ENCODE measurements at regions of chr5 and their contacts with region 1.

Region 1: GRCh38 chr5:172707285-172708182 is 63.5 kb downstream of the DUSP1 start:
- DNase-seq: peak; percentile 24
- H3K4me3 ChIP-seq: 0 out of 2 replicates have a peak overlapping the region, but pooled peaks have one; percentile 8
- CTCF ChIP-seq: peak; percentile 75

Region 2: DNA sequence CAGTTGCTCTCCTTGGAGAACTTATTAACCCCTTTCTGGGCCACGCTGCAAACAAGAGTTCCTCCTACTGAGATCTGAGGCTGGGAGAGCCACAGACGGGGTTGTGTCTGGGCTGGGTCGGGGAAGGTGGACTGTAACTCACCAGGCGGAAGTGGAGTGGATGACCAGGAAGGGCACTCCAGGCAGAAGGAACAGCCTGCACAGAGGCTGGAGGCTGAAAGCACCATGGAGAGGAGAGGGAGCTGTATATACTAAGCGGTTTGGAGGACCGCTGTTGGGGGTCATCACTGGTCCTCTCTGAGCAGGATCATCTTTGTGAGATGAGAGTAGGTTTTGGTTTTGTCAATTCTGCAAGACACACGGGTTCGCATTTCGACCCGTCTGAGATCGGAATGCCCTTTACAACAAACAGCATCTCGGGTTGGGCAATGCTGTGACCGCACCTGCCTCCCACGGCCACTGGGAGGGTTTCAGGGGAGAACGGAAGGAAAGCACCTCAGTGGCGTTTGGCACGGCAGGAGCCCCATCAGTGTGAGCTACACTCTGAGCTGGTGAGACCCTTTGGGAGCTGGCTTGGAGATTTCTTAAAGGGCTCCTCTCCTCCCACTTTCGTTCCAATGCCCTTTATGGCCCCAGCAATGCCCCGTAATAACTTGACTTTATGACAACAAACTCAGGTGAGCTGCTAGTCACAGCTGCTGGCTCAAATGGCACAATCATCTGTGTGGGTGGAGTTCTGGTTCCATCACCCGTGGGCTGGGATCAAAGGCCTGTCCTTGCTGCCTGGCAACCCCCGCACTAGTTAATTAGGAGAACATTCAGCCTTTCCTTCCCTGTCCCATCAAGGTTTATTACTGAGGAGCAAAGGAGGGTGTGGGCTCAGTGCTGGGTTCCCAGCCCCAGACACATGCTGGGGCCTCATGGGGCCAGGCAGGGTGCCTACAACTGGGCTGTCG is 85.2 kb before region 1 on chr5:
- CTCF ChIA-PET with region 1: no interaction called
- POLR2A ChIA-PET with region 1: no interaction called
- DNase-seq: no peak
- H3K4me3 ChIP-seq: no peak overlapping the region
- CTCF ChIP-seq: no peak

Region 3: GRCh38 chr5:172973127-172973916 is 265.8 kb after region 1 on chr5:
- CTCF ChIA-PET with region 1: interaction called, 33 read pairs
- POLR2A ChIA-PET with region 1: no interaction called
- DNase-seq: no peak
- H3K4me3 ChIP-seq: no peak overlapping the region
- CTCF ChIP-seq: no peak

Region 4: DNA sequence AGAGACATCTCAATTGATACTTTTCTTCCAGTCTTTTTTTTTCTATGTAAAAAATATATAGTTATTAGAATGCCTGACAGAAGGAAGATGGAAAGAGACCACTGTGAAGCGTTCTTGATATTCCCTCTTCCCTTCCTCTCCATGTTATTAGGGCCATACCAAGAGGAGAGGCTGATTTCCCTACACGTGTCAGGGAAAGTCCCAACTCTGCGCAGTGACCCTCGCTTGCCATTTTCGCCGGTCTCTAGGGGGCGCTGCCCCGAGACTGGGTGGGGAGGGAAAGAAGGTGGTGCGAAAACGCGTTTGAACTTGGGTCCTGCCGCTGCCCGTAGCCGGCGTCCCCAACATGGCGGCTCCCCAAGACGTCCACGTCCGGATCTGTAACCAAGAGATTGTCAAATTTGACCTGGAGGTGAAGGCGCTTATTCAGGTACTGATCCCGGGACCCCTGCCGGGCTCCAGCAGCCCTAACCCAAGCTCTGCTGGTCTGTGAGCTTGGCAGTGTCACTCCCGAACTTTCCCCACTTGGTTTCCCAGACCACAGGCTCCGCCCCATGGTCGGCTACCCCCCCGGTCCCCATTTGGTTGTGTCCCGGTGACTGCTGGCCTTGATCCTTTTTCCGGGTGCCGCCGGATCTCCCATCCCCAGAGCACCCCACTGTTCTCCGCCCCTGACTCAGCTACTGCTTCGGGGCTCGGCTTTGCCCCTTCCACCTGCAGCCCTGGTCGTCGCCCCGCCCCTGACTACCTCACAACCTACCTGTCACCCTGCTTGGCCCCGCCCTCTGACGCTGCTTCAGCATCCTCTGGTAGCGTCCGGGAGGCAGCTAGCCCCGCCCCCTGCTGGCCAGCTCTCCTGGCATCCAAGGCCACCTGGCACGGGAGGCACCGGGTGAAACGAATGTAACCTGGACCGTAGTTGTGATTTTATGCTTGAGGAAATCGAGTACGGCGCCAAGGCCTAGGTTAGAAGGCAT is 437.0 kb after region 1 on chr5 and contains the start of gene BNIP1:
- CTCF ChIA-PET with region 1: interaction called, 13 read pairs
- POLR2A ChIA-PET with region 1: no interaction called
- DNase-seq: peak; percentile 71
- H3K4me3 ChIP-seq: peak within 1 kb of the TSS; percentile 100
- CTCF ChIP-seq: peak; percentile 99

Region 5: DNA sequence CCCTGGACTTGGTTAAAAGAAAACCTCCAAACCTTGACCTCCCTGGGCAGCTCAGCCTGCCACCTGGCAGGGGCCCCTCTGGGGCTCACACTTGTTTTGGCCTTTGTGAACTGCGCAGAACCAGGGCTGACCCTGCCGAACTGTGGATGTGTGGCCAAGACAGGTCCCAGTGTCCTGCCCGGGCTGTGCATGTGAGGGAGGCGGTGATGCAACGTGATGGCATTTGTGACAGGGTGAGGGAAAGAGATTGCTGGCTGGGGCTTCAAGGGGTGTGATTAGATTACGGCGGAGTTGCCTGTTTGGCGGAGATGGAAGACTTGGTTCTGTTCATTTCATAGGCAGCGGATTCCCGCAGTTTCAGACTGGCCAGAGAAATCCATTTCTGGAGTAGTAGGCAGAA is 557.9 kb after region 1 on chr5:
- CTCF ChIA-PET with region 1: no interaction called
- POLR2A ChIA-PET with region 1: no interaction called
- DNase-seq: no peak
- H3K4me3 ChIP-seq: no peak overlapping the region
- CTCF ChIP-seq: no peak

Region 6: DNA sequence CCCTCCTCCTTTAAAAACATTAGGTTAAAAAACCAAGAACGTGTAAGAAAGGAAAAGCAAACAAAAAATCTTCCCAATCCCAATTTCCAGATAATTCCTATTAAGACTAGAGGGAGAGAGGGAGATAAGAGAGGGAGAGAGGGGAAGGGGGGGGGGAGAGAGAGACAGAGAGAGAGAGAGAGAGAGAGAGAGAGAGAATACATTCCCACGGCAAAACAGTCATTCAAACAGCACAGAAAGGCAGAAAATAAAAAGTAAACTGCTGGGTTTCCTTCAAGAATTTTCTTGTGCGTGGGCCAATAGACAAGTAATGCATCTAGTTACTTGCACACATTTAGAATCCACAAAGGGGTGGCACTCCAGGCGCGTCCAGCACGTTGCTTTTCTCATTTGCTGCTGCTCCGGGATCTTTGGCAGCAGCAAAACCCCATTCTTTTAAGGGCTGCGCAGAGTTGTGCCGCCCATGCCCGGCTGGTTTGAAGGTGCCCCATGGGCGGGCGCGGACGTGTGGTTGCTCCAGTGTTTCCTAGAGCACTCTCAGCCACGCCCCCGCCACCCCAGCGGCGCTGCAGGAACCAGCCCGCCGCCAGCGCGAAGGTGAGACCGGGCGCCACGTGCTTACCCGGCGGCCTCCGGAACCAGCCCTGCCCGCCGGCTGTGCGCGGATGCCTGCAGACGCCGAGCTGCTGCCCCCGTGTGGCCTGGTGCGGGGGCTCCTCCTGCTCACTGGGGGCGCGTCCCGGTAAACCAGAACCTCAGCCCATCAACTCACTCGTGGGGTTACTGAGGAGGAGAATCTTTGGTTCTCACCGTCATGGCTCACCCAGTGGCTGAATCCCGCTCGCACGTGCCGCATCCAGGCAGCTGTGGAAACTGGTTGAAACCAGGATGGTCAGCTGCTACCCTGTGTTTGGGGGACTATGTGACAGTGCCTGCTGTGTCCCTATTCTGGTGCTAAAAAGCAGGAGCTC is 576.1 kb after region 1 on chr5:
- CTCF ChIA-PET with region 1: interaction called, 17 read pairs
- POLR2A ChIA-PET with region 1: no interaction called
- DNase-seq: no peak
- H3K4me3 ChIP-seq: peak overlapping the region; percentile 42
- CTCF ChIP-seq: peak; percentile 94